ENCODE measurements at regions of chr5 and their contacts with region 1.

Region 1: DNA sequence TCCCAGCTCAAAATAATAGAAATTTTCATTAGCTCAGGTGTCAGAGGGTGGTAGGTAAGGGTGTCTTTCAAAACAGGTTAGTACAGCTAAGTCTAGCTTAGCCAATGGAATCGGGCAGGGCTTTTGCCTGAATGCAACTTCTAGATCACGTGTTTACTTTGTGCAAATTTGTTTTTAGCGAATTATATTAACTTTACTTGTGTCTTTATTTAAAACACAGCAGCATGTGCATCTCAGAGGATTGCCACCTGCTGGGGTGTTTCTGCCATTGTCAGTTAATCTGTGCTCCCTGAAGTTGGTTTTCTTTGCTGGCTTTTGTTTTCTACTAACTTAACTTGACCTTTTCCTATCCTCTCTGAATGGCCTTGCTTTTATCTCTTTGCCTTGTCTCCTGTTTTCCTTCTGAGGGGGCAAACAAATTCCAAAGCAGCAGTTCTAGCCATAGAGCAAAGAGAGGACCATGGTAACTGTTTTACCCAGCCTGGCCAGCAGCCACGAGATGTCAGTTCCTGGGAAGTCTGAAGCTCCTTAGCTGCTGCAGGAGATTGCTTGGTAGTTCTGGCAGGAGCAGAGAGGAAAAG is 67.6 kb downstream of the ARHGEF28 start:
- DNase-seq: no peak
- ATAC-seq: peak; percentile 37
- H3K4me3 ChIP-seq: no peak overlapping the region
- H3K27ac ChIP-seq: peak overlapping the region; percentile 14; the same call in 1 of the 2 replicates
- H3K4me1 ChIP-seq: peaks cover 17% of the 10 kb centered on the region
- H3K27me3 ChIP-seq: no peaks in the 10 kb centered on the region
- CTCF ChIP-seq: peak; percentile 36 to 60 (median 38); a peak in 5 of 6 replicates
- EP300 ChIP-seq: no peak
- POLR2A ChIP-seq: no peak
- RAD21 ChIP-seq: peak; percentile 42

Region 2: DNA sequence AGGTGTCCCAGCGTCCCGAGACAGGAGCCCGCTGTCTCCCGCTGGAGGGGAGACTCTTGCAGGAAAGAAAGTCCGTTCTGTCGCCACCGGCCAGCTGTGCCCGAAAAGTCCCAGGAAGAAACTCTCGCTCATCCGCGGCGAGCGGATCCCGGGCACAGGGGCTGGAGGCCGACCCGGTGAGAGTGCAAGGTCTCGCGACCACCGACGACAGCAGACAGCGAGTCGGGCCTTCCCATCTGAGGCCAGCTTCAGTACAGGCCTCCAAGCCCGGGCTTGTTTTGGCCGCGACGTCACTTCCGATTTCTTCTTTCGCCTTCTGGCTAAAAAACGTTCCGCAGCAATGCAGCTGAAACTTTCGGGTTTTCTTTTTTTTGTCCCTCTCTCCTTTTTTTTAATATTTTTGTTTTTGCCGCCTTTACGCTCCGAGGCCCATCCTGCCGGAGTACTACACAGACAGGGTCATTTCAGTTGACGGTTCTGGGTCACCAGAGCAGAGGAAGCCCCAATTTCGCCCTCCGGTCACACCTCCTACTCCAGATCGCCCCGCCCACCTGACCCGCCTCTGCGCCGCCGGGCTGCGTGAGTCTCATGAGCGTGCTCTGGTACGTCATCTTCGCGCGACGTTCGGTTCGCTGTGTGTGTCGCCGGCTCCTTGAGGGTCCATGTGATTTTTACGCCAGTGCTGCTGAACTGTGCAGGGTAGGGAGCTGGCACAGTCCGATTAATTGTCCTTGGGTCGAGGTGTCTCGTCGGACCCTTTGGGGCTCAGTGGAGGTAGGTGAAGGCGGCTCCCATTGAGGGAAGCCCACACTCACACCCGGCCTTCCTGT is 128.2 kb before region 1 on chr5 and contains the starts of genes ANKRA2 and UTP15:
- CTCF ChIA-PET with region 1: no interaction called
- POLR2A ChIA-PET with region 1: no interaction called
- RAD21 ChIA-PET with region 1: no interaction called
- SMC1A ChIA-PET with region 1: no interaction called
- in situ Hi-C with region 1: no loop called
- intact Hi-C with region 1: no loop called
- DNase-seq: peak; percentile 90
- ATAC-seq: peak; percentile 94
- H3K4me3 ChIP-seq: peak within 1 kb of the TSS; percentile 90
- H3K27ac ChIP-seq: peak within 1 kb of the TSS; percentile 86
- H3K4me1 ChIP-seq: no peaks in the 10 kb centered on the region
- H3K27me3 ChIP-seq: no peaks in the 10 kb centered on the region
- CTCF ChIP-seq: no peak
- EP300 ChIP-seq: 0 out of 4 replicates have a peak, but pooled peaks of 1 of the 2 experiments have one; percentile 11
- POLR2A ChIP-seq: peak; percentile 90
- RAD21 ChIP-seq: no peak
- polyA plus RNA-seq, gene ANKRA2: 19.4 to 31.3 TPM
- polyA plus RNA-seq, gene UTP15: 22.5 to 24.9 TPM

Region 3: DNA sequence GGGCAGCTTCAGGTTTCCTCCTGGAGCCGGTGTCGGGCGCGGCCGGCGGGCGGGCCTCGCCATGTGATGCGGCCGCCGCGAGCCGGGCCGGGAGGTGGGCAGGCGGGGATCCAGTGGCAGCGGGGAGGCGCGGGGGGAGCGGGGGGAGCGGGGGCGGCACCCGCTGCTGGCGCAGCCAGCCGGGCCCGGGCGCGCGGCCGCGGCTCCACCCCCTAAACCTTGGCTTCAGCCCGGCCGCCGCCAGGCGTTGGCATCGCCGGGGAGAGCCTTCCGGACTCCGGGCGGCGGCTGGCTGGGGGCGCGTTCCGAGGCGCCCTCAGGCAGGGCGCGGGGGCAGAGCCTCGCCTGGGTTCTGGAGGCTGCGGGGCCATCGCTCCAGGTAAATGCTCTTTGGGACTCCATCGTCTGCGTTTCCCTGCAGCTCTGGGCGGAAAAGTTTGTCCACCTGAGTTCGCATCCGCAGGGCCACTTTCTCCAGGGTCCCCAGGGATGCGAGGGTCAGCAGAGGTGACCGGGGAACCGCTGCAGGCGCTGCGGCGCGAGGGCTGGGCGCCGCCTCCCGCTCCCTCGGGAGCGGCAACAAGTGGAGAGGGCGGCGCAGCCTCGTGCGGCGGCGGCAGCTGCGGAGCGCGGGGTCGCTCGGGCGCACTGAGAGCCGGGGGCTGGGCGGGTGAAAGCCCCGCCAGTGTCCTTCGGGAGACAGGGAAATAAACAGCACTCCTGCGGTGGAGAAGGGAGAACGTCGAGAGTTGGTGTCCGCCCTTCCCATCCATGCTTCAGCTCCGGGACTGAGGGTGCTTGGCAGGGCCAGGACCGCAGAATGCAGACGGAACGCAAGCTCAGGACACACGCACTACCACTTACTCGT is 67.4 kb before region 1 on chr5 and contains the start of gene ARHGEF28:
- CTCF ChIA-PET with region 1: interaction called, 11 read pairs
- POLR2A ChIA-PET with region 1: interaction called, 3 read pairs
- RAD21 ChIA-PET with region 1: interaction called, 32 read pairs
- SMC1A ChIA-PET with region 1: interaction called, 11 read pairs
- in situ Hi-C with region 1: no loop called
- intact Hi-C with region 1: no loop called
- DNase-seq: no peak
- ATAC-seq: peak; percentile 84
- H3K4me3 ChIP-seq: peak within 1 kb of the TSS; percentile 71
- H3K27ac ChIP-seq: no peak within 1 kb of the TSS
- H3K4me1 ChIP-seq: no peaks in the 10 kb centered on the region
- H3K27me3 ChIP-seq: peaks cover 0 to 5% of the 10 kb centered on the region in 2 experiments; a peak in 2 of 4 replicates
- CTCF ChIP-seq: no peak
- EP300 ChIP-seq: no peak
- POLR2A ChIP-seq: no peak
- RAD21 ChIP-seq: no peak
- polyA plus RNA-seq, gene ARHGEF28: not detected

Region 4: GRCh38 chr5:73654171-73654811 is 39.3 kb before region 1 on chr5:
- CTCF ChIA-PET with region 1: interaction called, 24 read pairs
- POLR2A ChIA-PET with region 1: interaction called, 28 read pairs
- RAD21 ChIA-PET with region 1: interaction called, 19 read pairs
- SMC1A ChIA-PET with region 1: interaction called, 68 read pairs
- in situ Hi-C with region 1: no loop called
- intact Hi-C with region 1: loop called (anchors 5 kb)
- DNase-seq: peak; percentile 65
- ATAC-seq: peak; percentile 88
- H3K4me3 ChIP-seq: no peak overlapping the region
- H3K27ac ChIP-seq: peak overlapping the region; percentile 59
- H3K4me1 ChIP-seq: peaks cover 23% of the 10 kb centered on the region
- H3K27me3 ChIP-seq: no peaks in the 10 kb centered on the region; a peak in 1 of 4 replicates
- CTCF ChIP-seq: no peak
- EP300 ChIP-seq: peak in 1 of 2 experiments; percentile 69; a peak in 1 of 4 replicates
- POLR2A ChIP-seq: no peak
- RAD21 ChIP-seq: no peak

Region 5: DNA sequence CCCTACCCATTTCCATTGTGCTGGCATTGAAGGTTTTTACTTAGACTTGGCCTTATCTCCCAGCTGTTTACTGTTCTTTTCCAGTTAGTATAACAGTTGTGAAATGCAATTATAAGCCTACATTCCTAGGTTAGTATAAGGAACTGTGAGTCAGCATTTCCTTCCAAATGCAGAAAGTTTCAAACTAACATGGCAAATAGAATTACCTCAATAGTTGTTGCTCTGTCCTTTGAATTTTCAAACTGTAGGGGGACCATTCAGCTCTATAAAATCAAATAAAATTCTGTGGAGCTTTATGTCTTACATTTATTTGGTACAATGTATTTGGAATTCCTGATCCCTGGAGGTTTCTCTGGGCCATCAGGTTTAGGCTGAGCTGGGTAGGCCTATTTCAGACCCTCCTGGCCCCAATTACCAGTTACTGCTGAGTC is 20.4 kb before region 1 on chr5:
- CTCF ChIA-PET with region 1: interaction called, 22 read pairs
- POLR2A ChIA-PET with region 1: interaction called, 22 read pairs
- RAD21 ChIA-PET with region 1: interaction called, 37 read pairs
- SMC1A ChIA-PET with region 1: interaction called, 81 read pairs
- in situ Hi-C with region 1: no loop called
- intact Hi-C with region 1: loop called (anchors 2 kb)
- DNase-seq: no peak
- ATAC-seq: no peak
- H3K4me3 ChIP-seq: no peak overlapping the region
- H3K27ac ChIP-seq: no peak overlapping the region
- H3K4me1 ChIP-seq: peaks cover 12% of the 10 kb centered on the region
- H3K27me3 ChIP-seq: no peaks in the 10 kb centered on the region
- CTCF ChIP-seq: no peak
- EP300 ChIP-seq: no peak
- POLR2A ChIP-seq: no peak
- RAD21 ChIP-seq: no peak

Region 6: DNA sequence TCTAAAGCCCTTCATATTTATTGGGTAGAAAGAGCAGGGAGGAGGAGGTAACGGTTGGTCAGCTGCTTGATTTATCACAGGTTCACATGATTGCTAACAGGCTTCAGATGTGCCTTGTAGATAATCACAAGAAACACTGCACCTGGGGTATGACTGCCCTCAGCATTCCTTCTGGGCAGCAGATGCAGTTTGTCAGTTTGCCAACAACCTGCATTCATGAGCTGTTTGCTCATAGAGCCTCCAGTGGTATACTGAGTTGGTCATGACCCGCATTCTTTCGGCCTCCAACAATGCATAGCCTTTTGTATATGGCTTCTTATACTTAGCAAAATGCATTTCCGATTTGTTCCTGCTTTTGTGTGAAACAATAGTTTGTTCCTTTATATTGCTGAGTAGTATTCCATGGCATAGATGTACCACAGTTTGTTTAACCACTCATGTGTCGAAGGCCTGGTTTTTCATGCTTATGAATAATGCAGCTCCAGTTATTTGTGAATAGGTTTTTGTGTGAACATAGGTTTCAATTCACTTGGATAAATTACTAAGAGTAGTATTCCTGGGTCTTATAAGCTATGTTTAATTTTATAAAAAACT is 16.1 kb after region 1 on chr5:
- CTCF ChIA-PET with region 1: interaction called, 7 read pairs
- POLR2A ChIA-PET with region 1: no interaction called
- RAD21 ChIA-PET with region 1: interaction called, 49 read pairs
- SMC1A ChIA-PET with region 1: interaction called, 34 read pairs
- in situ Hi-C with region 1: no loop called
- intact Hi-C with region 1: no loop called
- DNase-seq: no peak
- ATAC-seq: no peak
- H3K4me3 ChIP-seq: no peak overlapping the region
- H3K27ac ChIP-seq: no peak overlapping the region
- H3K4me1 ChIP-seq: no peaks in the 10 kb centered on the region
- H3K27me3 ChIP-seq: no peaks in the 10 kb centered on the region; a peak in 1 of 4 replicates
- CTCF ChIP-seq: no peak
- EP300 ChIP-seq: no peak
- POLR2A ChIP-seq: no peak
- RAD21 ChIP-seq: no peak

Region 7: DNA sequence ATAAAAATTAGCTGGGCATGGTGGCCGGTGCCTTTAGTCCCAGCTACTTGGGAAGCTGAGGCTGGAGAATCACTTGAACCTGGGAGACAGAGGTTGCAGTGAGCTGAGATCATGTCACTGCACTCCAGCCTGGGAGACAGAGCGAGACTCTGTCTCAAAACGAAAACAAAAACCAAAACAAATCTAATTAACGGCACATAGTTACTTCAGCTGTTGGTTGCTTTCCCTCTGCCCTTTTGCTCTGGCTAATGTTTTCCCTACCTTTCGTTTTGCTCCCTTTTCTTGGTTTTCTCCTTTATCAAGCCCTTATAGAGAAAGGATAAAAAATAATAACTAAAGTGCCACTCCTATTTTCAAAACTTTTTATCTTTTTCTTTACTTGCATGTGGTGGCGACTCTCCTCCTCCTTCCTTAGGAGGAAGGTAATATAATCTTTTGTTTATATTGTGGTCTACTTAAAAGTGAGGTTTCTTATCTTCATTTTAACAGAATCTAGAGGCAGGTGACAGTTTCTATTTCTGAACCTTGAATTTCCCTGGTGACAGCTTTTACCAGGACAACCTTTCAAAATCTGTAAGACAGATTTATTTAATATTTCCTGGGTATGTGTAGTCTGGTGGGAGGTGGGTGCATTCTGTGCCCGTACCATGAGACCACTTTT is 57.8 kb after region 1 on chr5:
- CTCF ChIA-PET with region 1: interaction called, 15 read pairs
- POLR2A ChIA-PET with region 1: interaction called, 15 read pairs
- RAD21 ChIA-PET with region 1: interaction called, 31 read pairs
- SMC1A ChIA-PET with region 1: interaction called, 55 read pairs
- in situ Hi-C with region 1: no loop called
- intact Hi-C with region 1: no loop called
- DNase-seq: no peak
- ATAC-seq: peak; percentile 86
- H3K4me3 ChIP-seq: no peak overlapping the region
- H3K27ac ChIP-seq: peak overlapping the region; percentile 32
- H3K4me1 ChIP-seq: peaks cover 3% of the 10 kb centered on the region; the same call in 1 of the 2 replicates
- H3K27me3 ChIP-seq: peaks cover 0 to 4% of the 10 kb centered on the region in 2 experiments; a peak in 2 of 4 replicates
- CTCF ChIP-seq: no peak
- EP300 ChIP-seq: peak in 1 of 2 experiments; percentile 34; a peak in 1 of 4 replicates
- POLR2A ChIP-seq: no peak
- RAD21 ChIP-seq: no peak

Region 8: DNA sequence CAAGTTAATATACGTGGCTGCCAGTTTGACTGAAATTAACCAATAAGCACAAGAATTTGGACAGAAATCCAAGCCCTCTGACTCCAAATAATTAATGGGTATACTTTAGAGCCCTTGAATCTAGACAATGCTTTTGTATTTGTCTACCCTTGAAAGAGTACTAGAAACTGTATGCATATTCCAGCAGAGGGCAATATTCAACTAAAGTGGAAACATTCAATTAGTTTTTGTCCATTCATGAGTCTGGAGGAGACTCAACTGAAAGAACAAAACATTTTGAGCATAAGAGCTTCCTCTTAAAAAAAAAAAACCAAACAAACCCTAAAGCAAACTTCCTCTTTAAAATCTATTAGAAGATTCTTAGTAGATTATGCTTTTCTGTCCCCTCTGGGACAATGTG is 90.3 kb after region 1 on chr5:
- CTCF ChIA-PET with region 1: interaction called, 19 read pairs
- POLR2A ChIA-PET with region 1: no interaction called
- RAD21 ChIA-PET with region 1: interaction called, 7 read pairs
- SMC1A ChIA-PET with region 1: interaction called, 95 read pairs
- in situ Hi-C with region 1: no loop called
- intact Hi-C with region 1: no loop called
- DNase-seq: no peak
- ATAC-seq: peak; percentile 74
- H3K4me3 ChIP-seq: no peak overlapping the region
- H3K27ac ChIP-seq: no peak overlapping the region
- H3K4me1 ChIP-seq: no peaks in the 10 kb centered on the region
- H3K27me3 ChIP-seq: no peaks in the 10 kb centered on the region; a peak in 1 of 4 replicates
- CTCF ChIP-seq: peak; percentile 18 to 38 (median 29); a peak in 2 of 6 replicates
- EP300 ChIP-seq: no peak
- POLR2A ChIP-seq: no peak
- RAD21 ChIP-seq: no peak